Activated CD4-positive, alpha-beta memory T cell treated with anti-CD3 and anti-CD28 coated beads for 36 hours (primary cell): ENCODE measurements at regions of chr4 and their contacts with region 1.

Region 1: DNA sequence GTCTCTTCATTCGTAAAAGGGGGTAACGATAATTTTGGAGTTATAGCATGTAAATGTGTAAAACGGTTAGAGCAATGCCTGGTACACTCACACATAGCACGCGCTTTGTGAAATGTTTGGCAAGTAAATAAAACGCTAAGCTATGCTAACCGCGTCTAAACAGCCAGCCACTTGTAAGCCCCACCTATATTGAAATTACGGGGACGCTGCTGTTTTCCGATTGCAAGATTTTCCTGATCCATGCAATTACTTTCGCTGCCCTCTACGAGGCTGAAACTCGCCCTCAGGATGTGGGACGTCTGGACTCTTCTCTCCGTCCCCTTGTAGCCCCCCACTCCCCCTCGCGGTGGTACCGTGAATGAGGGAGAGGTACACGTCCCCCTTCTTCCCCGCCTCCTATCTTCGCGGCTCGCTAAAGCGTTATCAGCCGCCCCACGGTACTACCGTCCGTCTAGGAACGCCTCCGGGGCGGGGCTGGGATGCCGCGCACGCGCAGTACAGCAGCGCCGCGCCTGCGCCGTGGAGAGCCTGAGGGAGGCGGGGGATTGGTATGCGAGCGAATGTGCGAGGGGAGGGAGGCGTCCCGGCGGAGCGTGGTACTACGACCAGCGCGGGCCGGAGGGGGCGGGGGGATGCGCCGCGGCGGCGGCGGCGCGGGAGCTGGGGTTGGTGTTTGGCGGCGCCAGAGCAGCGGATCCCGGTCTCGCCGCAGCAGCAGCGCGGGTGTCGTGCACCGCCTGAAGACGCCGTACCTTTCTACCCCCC is at the start of gene STIM2:
- DNase-seq: peak; percentile 99
- H3K4me3 Mint-ChIP-seq: peak within 1 kb of the TSS; percentile 99
- H3K27ac Mint-ChIP-seq: peak within 1 kb of the TSS; percentile 94
- H3K4me1 Mint-ChIP-seq: peaks cover 44% of the 10 kb centered on the region
- H3K27me3 Mint-ChIP-seq: no peaks in the 10 kb centered on the region
- total RNA-seq, gene STIM2: 37.8 to 40.6 TPM

Region 2: GRCh38 chr4:26028793-26029567 is 831.4 kb before region 1 on chr4:
- CTCF ChIA-PET with region 1: no interaction called
- POLR2A ChIA-PET with region 1: no interaction called
- intact Hi-C with region 1: loop called (anchors 10 kb)
- DNase-seq: peak; percentile 85
- H3K4me3 Mint-ChIP-seq: no peak overlapping the region
- H3K27ac Mint-ChIP-seq: no peak overlapping the region
- H3K4me1 Mint-ChIP-seq: peaks cover 16% of the 10 kb centered on the region
- H3K27me3 Mint-ChIP-seq: peaks cover 2% of the 10 kb centered on the region

Region 3: DNA sequence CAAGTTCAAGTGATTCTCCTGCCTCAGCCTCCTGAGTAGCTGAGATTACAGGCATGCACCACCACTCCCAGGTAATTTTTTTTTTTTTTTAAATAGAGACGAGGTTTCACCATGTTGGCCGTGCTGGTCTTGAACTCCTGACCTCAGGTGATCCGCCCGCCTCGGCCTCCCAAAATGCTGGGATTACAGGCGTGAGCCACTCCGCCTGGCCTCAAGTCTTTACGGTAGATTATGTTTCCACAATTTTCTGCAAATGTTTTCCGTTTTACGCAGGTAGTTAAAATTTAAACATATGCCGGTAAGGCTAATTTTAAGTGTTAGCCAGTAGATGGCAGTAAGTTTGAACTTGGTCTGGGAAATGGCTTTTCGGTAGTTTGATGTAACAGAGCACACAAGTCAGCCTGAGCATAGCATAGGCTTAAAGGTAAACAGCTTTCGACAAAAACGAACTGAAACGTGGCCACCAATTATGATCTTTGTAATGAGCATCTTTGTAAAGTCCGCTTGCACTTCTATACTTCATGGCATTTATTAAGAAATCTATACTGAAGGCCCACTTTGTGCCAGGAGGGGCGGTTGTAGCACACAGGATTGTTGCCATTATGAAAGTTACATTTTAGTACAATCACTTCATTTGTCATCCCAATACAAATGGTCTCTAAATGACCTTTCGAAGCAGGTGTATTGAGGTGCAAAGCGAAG is 401.1 kb before region 1 on chr4:
- CTCF ChIA-PET with region 1: interaction called, 3 read pairs
- POLR2A ChIA-PET with region 1: no interaction called
- intact Hi-C with region 1: loop called (anchors 10 kb)
- DNase-seq: no peak
- H3K4me3 Mint-ChIP-seq: peak overlapping the region; percentile 33
- H3K27ac Mint-ChIP-seq: no peak overlapping the region
- H3K4me1 Mint-ChIP-seq: peaks cover 10% of the 10 kb centered on the region
- H3K27me3 Mint-ChIP-seq: no peaks in the 10 kb centered on the region

Region 4: DNA sequence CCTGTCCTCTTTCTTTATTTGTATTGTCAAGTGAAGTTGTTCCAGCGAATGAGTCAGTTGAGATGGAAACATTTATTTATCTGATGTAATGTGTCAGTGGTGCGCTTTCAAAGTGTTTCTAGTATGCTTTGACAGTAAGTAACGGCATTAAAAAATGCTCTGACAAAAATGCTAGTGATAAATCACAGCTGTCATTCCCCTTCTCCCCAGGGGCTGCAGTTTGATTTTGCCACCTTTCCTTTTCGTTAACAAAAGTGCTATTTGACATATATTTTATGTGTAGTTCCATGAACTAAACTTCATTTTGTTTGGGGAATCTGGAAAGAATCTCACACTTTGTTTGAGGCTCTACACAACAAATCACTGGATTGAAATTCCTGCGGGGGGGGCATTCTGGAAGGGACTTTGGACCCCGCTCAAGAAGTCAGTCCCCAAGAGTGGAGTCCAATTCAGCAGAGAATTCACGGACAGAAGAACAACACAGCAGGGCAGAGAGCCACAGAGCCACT is 284.1 kb before region 1 on chr4:
- CTCF ChIA-PET with region 1: no interaction called
- POLR2A ChIA-PET with region 1: no interaction called
- intact Hi-C with region 1: no loop called
- DNase-seq: no peak
- H3K4me3 Mint-ChIP-seq: no peak overlapping the region
- H3K27ac Mint-ChIP-seq: no peak overlapping the region
- H3K4me1 Mint-ChIP-seq: no peaks in the 10 kb centered on the region
- H3K27me3 Mint-ChIP-seq: peaks cover 12% of the 10 kb centered on the region

Region 5: DNA sequence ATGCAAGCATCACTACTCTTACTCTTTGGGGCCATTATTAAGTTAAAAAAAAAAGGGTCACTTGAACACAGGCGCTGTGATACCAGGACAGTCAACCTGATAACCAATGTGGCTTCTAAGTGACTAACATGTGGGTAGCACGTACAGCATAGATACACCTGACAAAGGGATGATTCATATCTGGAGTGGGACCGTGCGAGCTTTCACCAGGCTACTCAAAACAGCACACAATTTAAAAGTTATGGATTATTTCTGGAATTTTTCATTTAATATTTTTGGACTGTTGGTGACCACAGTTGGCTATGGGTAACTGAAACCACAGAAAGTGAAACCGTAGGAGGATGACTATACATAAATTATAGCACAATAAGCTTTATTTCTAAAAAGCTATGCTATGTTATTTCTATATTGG is 113.5 kb before region 1 on chr4:
- CTCF ChIA-PET with region 1: no interaction called
- POLR2A ChIA-PET with region 1: interaction called, 5 read pairs
- intact Hi-C with region 1: loop called (anchors 2 kb)
- DNase-seq: peak; percentile 72
- H3K4me3 Mint-ChIP-seq: no peak overlapping the region
- H3K27ac Mint-ChIP-seq: no peak overlapping the region
- H3K4me1 Mint-ChIP-seq: peaks cover 13% of the 10 kb centered on the region
- H3K27me3 Mint-ChIP-seq: no peaks in the 10 kb centered on the region

Region 6: GRCh38 chr4:26885912-26886274 is 25.6 kb after region 1 on chr4:
- CTCF ChIA-PET with region 1: interaction called, 25 read pairs
- POLR2A ChIA-PET with region 1: interaction called, 72 read pairs
- intact Hi-C with region 1: loop called (anchors 1 kb)
- DNase-seq: no peak
- H3K4me3 Mint-ChIP-seq: peak overlapping the region; percentile 63
- H3K27ac Mint-ChIP-seq: peak overlapping the region; percentile 83
- H3K4me1 Mint-ChIP-seq: peaks cover 67% of the 10 kb centered on the region
- H3K27me3 Mint-ChIP-seq: no peaks in the 10 kb centered on the region

Region 7: DNA sequence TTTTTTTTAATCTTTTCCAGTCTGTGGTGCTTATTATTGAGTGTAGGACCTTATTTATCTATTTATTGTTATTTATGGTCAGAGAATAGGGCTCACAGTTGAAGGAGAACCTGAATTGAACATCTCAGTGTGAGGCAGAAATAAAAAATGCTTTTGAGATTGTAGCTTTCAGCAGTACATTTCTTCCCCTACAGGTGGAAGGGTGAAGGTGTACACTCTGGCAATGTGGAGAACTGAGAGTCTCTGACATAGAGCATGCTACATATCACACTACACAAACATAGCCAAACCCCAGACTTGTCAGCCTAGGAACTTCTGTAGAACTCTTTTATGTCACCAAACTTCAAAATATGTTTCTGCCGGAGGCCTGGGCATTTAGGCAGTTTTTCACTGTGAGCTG is 140.5 kb after region 1 on chr4:
- CTCF ChIA-PET with region 1: interaction called, 5 read pairs
- POLR2A ChIA-PET with region 1: interaction called, 5 read pairs
- intact Hi-C with region 1: loop called (anchors 1 kb)
- DNase-seq: no peak
- H3K4me3 Mint-ChIP-seq: no peak overlapping the region
- H3K27ac Mint-ChIP-seq: peak overlapping the region; percentile 51
- H3K4me1 Mint-ChIP-seq: peaks cover 52% of the 10 kb centered on the region
- H3K27me3 Mint-ChIP-seq: no peaks in the 10 kb centered on the region